Right ventricle myocardium inferior (tissue), 1 donor: ENCODE measurements at regions of chr19 and their contacts with region 1.

Region 1: GRCh38 chr19:13277104-13277809 is 127.0 kb downstream of the IER2 start:
- DNase-seq: no peak
- ATAC-seq: peak; percentile 89

Region 2: GRCh38 chr19:13181747-13182388 is 95.4 kb before region 1 on chr19:
- intact Hi-C with region 1: no loop called
- DNase-seq: peak; percentile 84
- ATAC-seq: peak; percentile 88

Region 3: DNA sequence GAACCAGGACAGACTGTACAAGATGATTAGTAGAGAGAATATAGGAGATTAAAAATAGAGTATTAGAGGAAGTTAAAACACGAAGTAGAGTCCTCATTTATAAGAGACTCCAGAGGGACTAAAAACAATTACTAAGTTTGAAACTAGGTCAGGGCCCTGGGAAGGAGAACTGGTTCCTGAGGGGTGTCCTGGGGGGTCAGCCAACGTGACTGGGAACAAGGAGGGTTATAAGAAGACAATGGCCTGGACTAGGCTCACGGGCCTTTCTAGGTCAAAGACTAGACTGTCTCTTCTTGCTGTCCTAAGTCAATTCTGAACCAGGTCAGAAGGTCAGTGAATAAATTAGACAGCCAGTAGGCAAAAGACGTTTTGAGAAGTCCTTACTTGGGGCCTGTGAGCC is 38.2 kb after region 1 on chr19:
- intact Hi-C with region 1: no loop called
- DNase-seq: no peak
- ATAC-seq: peak; percentile 16

Region 4: GRCh38 chr19:13430790-13431582 is 153.7 kb after region 1 on chr19:
- intact Hi-C with region 1: loop called (anchors 2 kb)
- DNase-seq: no peak
- ATAC-seq: peak; percentile 31

Region 5: GRCh38 chr19:13588957-13589833 is 311.9 kb after region 1 on chr19:
- intact Hi-C with region 1: loop called (anchors 1 kb)
- DNase-seq: peak; percentile 89
- ATAC-seq: peak; percentile 62

Region 6: GRCh38 chr19:13718733-13719132 is 441.5 kb after region 1 on chr19:
- intact Hi-C with region 1: loop called (anchors 5 kb)
- DNase-seq: no peak
- ATAC-seq: peak; percentile 73